ENCODE measurements at regions of chr6 and their contacts with region 1.

Region 1: GRCh38 chr6:41787219-41787917 is at the start of gene TOMM6:
- DNase-seq: peak; percentile 99
- H3K4me3 Mint-ChIP-seq: peak within 1 kb of the TSS; percentile 95
- H3K27ac Mint-ChIP-seq: peak within 1 kb of the TSS; percentile 98
- H3K4me1 Mint-ChIP-seq: peaks cover 12% of the 10 kb centered on the region
- H3K27me3 Mint-ChIP-seq: peaks cover 12% of the 10 kb centered on the region
- total RNA-seq, gene TOMM6: 367 and 376 TPM in 2 replicates

Region 2: GRCh38 chr6:41735427-41736356 is 51.7 kb before region 1 on chr6 and contains the start of gene TFEB:
- intact Hi-C with region 1: loop called (anchors 1 kb)
- DNase-seq: peak; percentile 99
- H3K4me3 Mint-ChIP-seq: peak within 1 kb of the TSS; percentile 86
- H3K27ac Mint-ChIP-seq: peak within 1 kb of the TSS; percentile 62
- H3K4me1 Mint-ChIP-seq: peaks cover 30% of the 10 kb centered on the region
- H3K27me3 Mint-ChIP-seq: no peaks in the 10 kb centered on the region
- total RNA-seq, gene TFEB: 14.1 and 14.9 TPM in 2 replicates

Region 3: DNA sequence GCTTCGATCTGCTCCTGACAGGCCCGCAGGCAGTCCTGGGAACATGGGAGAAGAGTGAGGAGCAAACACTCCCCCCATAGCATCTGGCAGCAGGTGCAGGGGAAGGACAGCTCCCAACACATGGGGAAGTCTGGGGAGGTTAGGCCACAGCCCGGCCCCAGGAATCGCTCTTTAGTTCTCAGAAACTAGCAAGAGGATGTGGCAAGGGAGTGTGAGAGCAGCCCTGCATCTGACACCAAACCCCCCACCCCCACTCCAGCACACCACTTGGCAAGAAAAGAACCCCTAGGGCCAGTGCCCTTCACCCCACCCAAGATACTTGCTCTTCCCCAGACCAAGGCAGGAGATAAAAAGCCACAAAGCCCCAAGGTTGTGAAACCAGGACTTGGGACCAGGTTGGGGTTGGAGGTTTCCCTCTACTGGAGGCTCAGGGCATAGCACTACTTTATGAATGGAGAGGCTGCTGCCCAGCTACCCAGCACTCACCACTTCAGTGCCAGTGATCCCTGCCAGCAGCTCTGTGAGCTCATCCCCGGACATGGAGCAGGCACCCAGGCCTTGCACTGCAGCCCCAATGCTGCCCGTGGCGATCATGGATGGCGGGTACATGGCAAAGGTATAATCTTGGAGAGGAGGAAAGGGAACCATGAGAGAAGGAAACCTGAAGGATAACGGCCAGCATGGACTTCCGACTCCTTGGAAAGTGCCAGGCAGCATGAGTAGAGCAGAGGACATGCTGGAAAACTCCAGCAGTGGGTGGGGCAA is 148.9 kb after region 1 on chr6:
- intact Hi-C with region 1: loop called (anchors 5 kb)
- DNase-seq: peak; percentile 96
- H3K4me3 Mint-ChIP-seq: peak overlapping the region; percentile 100
- H3K27ac Mint-ChIP-seq: peak overlapping the region; percentile 87
- H3K4me1 Mint-ChIP-seq: peaks cover 68% of the 10 kb centered on the region
- H3K27me3 Mint-ChIP-seq: no peaks in the 10 kb centered on the region

Region 4: DNA sequence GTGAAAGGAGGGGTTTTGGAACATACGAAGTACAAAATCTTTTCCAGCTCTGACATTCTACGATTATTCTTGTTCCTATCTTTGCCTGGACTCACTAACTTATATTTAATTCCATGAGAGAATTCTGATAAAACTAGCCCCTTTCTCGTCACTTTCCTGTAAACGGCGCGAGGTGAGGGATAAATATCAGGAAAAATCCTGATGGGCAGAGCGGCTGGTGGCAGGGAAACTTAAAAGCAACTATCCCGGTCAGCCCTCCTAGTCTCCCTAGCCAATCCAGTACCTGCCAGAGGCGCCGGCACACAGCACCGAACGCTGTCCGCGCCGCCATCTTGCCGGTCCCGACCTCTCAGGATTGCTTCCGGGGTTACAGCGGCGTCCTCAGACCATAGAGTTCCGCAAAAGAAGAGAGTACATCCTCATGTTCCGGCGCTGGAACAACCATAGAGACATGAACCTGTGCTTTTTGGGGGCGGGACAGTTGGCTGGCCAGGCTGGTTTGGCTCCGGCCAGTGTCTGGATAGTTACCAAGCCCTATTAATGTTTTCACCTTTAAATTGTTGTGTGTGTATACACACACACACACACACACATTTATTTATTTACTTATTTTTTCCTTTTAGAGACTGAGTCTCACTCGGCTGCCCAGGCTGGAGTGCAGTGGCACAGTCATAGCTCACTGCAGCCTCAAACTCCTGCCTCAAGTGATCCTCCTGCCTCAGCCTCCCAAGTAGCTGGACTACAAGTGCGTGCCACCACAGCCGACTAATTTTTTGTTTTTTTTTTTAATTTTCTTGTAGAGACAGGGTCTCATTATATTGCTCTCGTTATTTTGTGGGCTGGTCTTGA is 430.4 kb after region 1 on chr6 and contains the start of gene MRPS10:
- intact Hi-C with region 1: loop called (anchors 5 kb)
- DNase-seq: peak; percentile 97
- H3K4me3 Mint-ChIP-seq: peak within 1 kb of the TSS; percentile 98
- H3K27ac Mint-ChIP-seq: peak within 1 kb of the TSS; percentile 93
- H3K4me1 Mint-ChIP-seq: peaks cover 21% of the 10 kb centered on the region
- H3K27me3 Mint-ChIP-seq: no peaks in the 10 kb centered on the region
- total RNA-seq, gene MRPS10: 49.4 and 50.8 TPM in 2 replicates

Measured in activated CD4-positive, alpha-beta T cell treated with anti-CD3 and anti-CD28 coated beads, Interleukin-2, amount 10 ng/mL, durations not matched to agents 24 days and 14 days (primary cell).